ENCODE measurements at regions of chr7 and their contacts with region 1.

Region 1: GRCh38 chr7:44638611-44639557 is 32.5 kb downstream of the OGDH start:
- DNase-seq: peak; percentile 62
- ATAC-seq: peak; percentile 78
- H3K4me3 ChIP-seq: no peak overlapping the region; a peak in 1 of 6 replicates
- H3K27ac ChIP-seq: peak overlapping the region; percentile 63
- H3K4me1 ChIP-seq: peaks cover 40% of the 10 kb centered on the region
- H3K27me3 ChIP-seq: no peaks in the 10 kb centered on the region
- CTCF ChIP-seq: no peak
- EP300 ChIP-seq: peak in 1 of 2 experiments; percentile 55; a peak in 1 of 4 replicates
- POLR2A ChIP-seq: no peak
- RAD21 ChIP-seq: no peak

Region 2: DNA sequence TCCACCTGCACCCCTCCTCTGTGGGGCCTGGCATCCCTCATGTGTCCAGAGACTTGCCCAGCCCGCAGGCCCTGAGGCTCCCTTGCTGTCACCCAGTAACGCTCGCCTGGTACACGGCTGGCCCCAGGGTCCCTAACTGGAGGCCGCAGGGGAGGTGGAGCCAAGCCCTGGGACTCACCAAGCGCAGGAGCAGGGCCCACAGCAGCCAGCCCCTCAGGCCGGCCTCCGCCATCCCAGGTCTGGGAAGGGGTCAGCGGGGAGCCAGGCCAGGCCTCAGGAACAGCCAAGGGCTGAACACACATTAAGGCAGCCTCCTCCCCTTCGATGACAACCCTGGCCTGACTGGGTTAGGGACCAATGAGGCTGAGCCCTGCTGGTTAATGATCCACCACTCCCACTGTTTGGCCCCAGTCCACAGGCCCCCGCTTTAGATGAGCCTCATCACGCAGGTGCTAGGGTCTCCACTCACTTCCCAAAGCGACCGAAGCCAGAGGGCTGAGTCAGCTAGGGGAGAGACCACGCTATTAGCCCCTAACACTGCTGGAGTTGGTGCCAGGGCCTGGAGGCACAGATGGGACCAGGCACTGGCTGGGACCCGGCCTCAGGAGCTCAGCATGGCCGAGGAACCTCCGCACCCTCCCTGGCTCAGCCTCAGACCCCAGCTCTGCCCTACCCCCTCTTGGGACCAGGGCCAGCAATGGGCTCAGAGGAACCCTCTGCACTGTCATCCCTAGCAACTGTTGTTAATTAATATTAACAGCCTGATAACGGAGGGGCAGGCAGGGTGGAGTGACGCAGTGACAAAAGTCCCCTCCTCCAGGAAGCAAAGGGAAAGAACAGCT is 97.6 kb before region 1 on chr7 and contains the start of gene NPC1L1:
- CTCF ChIA-PET with region 1: no interaction called
- POLR2A ChIA-PET with region 1: no interaction called
- in situ Hi-C with region 1: no loop called
- intact Hi-C with region 1: no loop called
- DNase-seq: peak; percentile 91
- ATAC-seq: peak; percentile 94
- H3K4me3 ChIP-seq: peak within 1 kb of the TSS; percentile 57 to 79 (median 63)
- H3K27ac ChIP-seq: peak within 1 kb of the TSS; percentile 94
- H3K4me1 ChIP-seq: peaks cover 84% of the 10 kb centered on the region
- H3K27me3 ChIP-seq: no peaks in the 10 kb centered on the region
- CTCF ChIP-seq: peak; percentile 16; the same call in 1 of the 2 replicates
- EP300 ChIP-seq: 0 out of 4 replicates have a peak, but pooled peaks of 1 of the 2 experiments have one; percentile 39
- POLR2A ChIP-seq: peak in 1 of 2 experiments; percentile 96; a peak in 2 of 4 replicates
- RAD21 ChIP-seq: no peak; the same call in 1 of the 2 replicates
- total RNA-seq, gene NPC1L1: 3.8 and 4.8 TPM in 2 replicates

Region 3: DNA sequence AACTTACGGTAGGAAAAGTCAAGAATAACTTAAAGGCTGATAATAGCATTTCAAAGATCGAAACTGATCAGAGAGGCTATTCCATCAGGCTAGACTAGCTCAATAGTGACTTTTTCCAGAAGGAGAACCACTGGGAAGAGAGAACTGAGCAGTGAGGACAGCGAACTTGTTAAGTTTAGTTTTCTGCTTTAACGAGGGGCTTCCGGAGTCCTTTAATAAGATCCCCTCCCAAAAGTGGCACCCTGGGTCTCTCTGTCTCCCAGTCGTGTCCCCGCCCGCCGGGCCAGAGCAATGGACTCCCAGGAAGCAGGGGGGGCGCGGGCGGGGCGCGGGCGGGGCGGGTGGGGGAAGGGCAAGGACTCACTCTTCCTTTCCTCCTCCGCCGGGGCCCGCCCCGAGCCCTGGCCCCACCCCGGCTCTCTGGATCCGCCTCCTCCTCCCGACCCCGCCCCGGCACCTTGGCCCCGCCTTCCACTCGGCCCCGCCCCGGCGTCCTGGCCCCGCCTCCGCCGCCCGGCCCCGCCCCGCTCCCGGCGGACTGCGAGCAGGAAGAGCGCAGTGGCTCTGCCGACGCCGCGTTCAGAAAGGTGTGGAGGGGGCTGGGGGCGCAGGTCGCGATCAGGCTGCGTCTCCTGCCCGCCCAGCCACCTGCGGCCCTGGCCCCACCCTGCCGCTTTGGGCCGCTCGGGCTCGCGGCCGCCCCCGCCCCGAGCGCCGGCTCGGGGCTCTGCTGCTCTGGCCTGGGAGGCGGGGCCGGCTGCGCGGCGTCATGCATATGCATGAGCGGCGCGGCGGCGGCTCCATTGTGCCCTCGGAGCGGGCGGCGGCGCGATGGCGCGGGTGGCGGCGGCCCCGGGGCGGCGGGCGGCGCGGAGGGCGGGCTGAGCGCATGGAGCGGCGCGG is 109.4 kb after region 1 on chr7 and contains the start of gene ZMIZ2:
- CTCF ChIA-PET with region 1: no interaction called
- POLR2A ChIA-PET with region 1: interaction called, 13 read pairs
- in situ Hi-C with region 1: no loop called
- intact Hi-C with region 1: no loop called
- DNase-seq: peak; percentile 64
- ATAC-seq: peak; percentile 86
- H3K4me3 ChIP-seq: peak within 1 kb of the TSS; percentile 82 to 94 (median 90)
- H3K27ac ChIP-seq: peak within 1 kb of the TSS; percentile 86
- H3K4me1 ChIP-seq: peaks cover 26% of the 10 kb centered on the region
- H3K27me3 ChIP-seq: no peaks in the 10 kb centered on the region; a peak in 1 of 5 replicates
- CTCF ChIP-seq: no peak
- EP300 ChIP-seq: peak in 1 of 2 experiments; percentile 9; a peak in 1 of 4 replicates
- POLR2A ChIP-seq: peak; percentile 37 to 57; a peak in 2 of 4 replicates
- RAD21 ChIP-seq: no peak
- total RNA-seq, gene ZMIZ2: 4.1 and 4.9 TPM in 2 replicates